ENCODE measurements at regions of chr4 and their contacts with region 1.

Region 1: DNA sequence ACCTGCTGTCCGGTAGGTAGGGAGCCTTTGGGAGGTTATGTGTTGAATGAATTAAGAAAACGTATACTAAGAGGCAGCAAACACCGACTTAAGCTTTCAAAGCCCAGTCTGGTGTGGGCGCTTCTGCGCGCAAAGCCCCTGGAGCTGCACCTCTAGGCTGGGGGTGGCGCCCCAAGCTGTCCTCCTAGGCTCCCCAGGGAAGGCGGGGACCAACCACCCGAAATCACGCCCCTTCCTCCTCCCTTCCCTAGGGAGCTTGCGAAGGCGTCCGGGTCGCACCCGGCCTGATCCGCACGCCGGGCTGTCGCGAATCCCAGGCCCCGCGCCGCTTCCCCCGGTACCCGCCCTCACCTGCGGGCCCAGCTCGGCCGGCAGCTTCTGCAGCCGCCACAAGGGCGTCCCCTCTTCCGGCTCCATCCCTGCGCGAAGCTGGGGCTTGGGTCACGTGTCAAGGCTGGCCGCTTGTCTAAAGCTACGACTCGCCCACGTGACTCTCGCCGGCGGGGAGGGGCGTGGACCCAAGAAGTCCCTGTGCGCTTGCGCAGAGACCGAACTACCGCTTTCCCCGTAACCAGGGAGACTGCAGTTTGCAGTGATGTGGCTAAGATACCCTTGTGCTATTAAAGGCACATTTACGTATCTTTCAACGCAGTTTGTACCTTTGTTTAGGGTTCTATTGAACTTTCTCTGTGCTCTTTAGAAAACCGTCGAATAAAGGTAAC is at the start of gene COMMD8:
- DNase-seq: peak; percentile 99
- H3K4me3 ChIP-seq: peak within 1 kb of the TSS; percentile 84
- H3K27ac ChIP-seq: peak within 1 kb of the TSS; percentile 81
- H3K4me1 ChIP-seq: peaks cover 45% of the 10 kb centered on the region
- CTCF ChIP-seq: peak; percentile 46; the same call in 1 of the 2 replicates
- total RNA-seq, gene COMMD8: 25.8 and 29.1 TPM in 2 replicates

Region 2: DNA sequence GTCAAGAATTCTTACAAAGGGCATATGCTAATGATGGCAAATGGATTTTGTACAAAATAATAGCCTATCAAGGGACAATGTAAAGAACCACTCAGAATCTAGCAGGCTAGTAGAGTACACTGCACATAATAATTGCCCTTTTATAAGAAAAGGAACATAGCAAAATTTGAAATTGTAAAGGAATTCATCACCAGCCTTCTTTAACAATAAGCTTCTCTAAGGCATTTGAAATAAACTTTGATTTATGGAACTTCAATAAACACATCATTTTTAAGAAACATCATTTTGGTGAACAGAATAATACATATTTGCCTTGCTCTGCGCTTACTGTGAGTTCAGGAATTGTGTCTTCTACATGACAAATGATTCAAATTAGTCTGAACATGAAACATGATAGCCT is 12.0 kb after region 1 on chr4:
- CTCF ChIA-PET with region 1: interaction called, 4 read pairs
- POLR2A ChIA-PET with region 1: interaction called, 140 read pairs
- intact Hi-C with region 1: no loop called
- DNase-seq: no peak
- H3K4me3 ChIP-seq: no peak overlapping the region
- H3K27ac ChIP-seq: no peak overlapping the region
- H3K4me1 ChIP-seq: no peaks in the 10 kb centered on the region
- CTCF ChIP-seq: no peak

Region 3: GRCh38 chr4:47914220-47914925 is 451.0 kb after region 1 on chr4 and contains the start of gene NFXL1:
- CTCF ChIA-PET with region 1: no interaction called
- POLR2A ChIA-PET with region 1: interaction called, 3 read pairs
- intact Hi-C with region 1: loop called (anchors 2 kb)
- DNase-seq: peak; percentile 97
- H3K4me3 ChIP-seq: peak within 1 kb of the TSS; percentile 98
- H3K27ac ChIP-seq: peak within 1 kb of the TSS; percentile 54
- H3K4me1 ChIP-seq: peaks cover 33% of the 10 kb centered on the region
- CTCF ChIP-seq: no peak
- total RNA-seq, gene NFXL1: 17.7 and 17.9 TPM in 2 replicates